Naive thymus-derived CD4-positive, alpha-beta T cell (primary cell): ENCODE measurements at regions of chr2 and their contacts with region 1.

Region 1: DNA sequence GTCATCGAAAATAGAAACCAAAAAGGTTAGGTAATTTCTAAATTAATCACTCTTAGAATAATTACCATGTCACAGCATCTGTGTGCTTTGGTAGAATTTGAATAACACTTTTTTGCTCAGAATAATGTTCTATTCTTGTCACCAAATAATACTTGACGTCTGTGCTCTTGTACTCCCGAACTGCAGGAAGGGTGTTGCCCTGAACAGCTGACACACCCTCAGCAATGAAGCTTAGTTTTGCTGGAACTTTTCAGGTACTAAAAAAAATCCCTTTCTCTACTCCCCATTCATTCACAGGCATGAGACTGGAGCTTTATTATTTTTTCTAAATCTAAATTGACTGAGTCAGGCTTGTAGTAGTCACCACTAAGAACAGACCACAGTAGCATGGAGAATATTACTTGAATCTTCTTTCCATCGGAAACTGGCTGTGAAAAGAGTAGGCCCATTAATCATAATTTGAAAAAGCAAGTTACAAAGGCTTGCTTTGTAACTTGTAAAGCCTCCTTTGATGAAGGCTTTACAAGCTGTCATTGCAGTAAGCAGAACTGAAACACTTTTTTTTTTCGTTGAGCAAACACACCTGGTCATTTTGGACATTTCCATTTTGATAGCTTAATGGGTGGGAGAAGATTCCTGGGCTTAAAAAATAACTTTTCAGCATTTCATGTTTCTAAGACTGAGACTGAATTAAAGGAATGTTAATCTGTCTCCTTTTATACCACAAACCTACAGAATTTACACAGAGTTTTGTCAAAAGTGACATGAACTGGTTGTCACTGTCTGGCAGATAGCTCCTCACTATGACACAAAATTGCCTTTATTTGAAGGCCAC is 70.3 kb upstream of the PELI1 start:
- DNase-seq: peak in 7 of 9 donors; percentile 60 to 82 (median 73)
- ATAC-seq: peak; percentile 73
- H3K4me3 ChIP-seq: peak overlapping the region; percentile 11
- H3K4me3 Mint-ChIP-seq: peak overlapping the region; percentile 35 to 89 (median 71)
- H3K27ac ChIP-seq: peak overlapping the region; percentile 68
- H3K27ac Mint-ChIP-seq: peak overlapping the region; percentile 78 to 96 (median 93)
- H3K4me1 ChIP-seq: peaks cover 20 to 37% of the 10 kb centered on the region in 2 donors
- H3K4me1 Mint-ChIP-seq: peaks cover 24 to 69% (median 55%) of the 10 kb centered on the region in 7 donors
- H3K27me3 ChIP-seq: no peaks in the 10 kb centered on the region
- H3K27me3 Mint-ChIP-seq: no peaks in the 10 kb centered on the region

Region 2: DNA sequence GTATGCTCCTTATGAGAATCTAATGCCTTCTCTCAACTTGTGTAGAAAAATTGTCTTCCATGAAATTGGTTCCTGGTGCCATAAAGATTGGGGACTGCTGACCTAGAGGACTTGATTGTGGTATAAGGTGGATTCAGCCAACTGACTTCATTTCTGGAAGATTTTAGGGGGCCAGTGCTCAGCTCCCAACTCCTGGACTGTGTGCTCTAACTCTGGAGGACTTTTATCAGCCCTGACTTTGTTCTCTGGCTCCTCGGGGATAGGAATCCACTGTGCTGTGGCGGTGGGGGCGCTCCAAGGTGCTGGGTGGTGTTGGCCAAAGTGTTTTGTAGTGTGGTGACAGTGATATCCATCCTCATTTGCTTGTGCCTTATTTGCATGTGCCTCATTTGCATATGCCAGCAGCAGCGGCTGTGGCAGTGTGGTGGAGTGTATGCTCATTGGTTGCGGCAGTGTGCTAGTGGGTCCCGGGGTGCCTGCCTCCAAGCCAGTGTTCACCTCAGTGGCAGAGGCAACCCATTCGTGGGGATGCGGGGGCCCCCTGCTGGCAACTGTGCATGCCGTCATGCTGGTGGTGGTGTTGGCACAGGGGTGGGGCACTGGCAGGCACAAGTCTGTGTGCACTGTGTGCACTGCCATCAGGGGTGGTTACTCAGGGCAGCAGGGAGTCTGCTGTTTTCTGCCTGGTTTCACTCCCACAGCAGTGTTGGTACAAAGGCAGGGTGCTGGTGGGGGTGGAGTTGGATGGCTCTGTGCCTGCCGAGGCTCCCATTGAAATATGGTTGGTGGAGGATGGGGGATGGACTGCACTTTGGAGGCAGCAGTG is 1489.4 kb before region 1 on chr2:
- CTCF ChIA-PET with region 1: no interaction called
- POLR2A ChIA-PET with region 1: no interaction called
- intact Hi-C with region 1: no loop called
- DNase-seq: no peak
- ATAC-seq: peak; percentile 49
- H3K4me3 ChIP-seq: no peak overlapping the region
- H3K4me3 Mint-ChIP-seq: peak overlapping the region in 1 of 10 donors; percentile 17
- H3K27ac ChIP-seq: no peak overlapping the region
- H3K27ac Mint-ChIP-seq: peak overlapping the region in 1 of 9 donors; percentile 2
- H3K4me1 ChIP-seq: no peaks in the 10 kb centered on the region
- H3K4me1 Mint-ChIP-seq: peaks cover 7 to 43% (median 39%) of the 10 kb centered on the region in 7 donors
- H3K27me3 ChIP-seq: no peaks in the 10 kb centered on the region
- H3K27me3 Mint-ChIP-seq: no peaks in the 10 kb centered on the region

Region 3: DNA sequence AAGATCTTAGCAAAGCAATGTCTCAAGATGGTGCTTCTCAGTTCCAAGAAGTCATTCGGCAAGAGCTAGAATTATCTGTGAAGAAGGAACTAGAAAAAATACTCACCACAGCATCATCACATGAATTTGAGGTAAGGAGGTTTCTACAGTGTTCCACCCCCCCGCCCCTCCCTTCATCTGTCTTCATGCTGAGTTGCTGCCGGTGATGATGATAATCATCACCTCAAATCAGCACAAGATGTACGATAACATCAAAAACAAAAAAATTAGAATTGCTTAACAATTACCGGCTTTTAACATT is 358.2 kb before region 1 on chr2:
- CTCF ChIA-PET with region 1: no interaction called
- POLR2A ChIA-PET with region 1: no interaction called
- intact Hi-C with region 1: loop called in 1 of 2 experiments (anchors 2 kb)
- DNase-seq: peak in 7 of 9 donors; percentile 54 to 87 (median 78)
- ATAC-seq: peak; percentile 93
- H3K4me3 ChIP-seq: peak overlapping the region; percentile 28
- H3K4me3 Mint-ChIP-seq: peak overlapping the region; percentile 42 to 78 (median 73)
- H3K27ac ChIP-seq: peak overlapping the region; percentile 81
- H3K27ac Mint-ChIP-seq: peak overlapping the region; percentile 85 to 97 (median 93)
- H3K4me1 ChIP-seq: peaks cover 27 to 36% of the 10 kb centered on the region in 2 donors
- H3K4me1 Mint-ChIP-seq: peaks cover 40 to 73% (median 71%) of the 10 kb centered on the region in 7 donors
- H3K27me3 ChIP-seq: no peaks in the 10 kb centered on the region
- H3K27me3 Mint-ChIP-seq: no peaks in the 10 kb centered on the region

Region 4: DNA sequence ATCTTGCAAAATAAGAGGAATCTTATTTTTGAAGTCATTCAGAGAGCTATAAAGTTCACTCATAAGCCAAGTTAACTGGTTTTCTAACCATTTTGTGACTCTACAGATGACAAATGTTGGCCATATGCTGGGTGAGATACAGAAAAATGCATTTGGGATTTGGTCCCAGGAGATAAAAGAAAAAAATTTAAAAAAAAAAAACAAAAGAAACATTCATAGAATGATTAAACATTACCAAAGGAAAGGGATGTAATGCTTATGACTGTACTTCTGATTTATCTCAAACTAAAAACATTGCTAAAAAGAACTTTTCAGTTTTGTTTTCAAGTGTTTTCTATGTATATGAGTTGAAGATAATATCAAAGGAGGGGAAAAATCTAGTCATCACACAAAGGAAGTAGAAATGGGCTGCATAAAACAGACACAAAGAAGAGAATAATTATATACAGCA is 113.3 kb before region 1 on chr2:
- CTCF ChIA-PET with region 1: no interaction called
- POLR2A ChIA-PET with region 1: no interaction called
- intact Hi-C with region 1: loop called in 1 of 2 experiments (anchors 1 kb)
- DNase-seq: peak in 6 of 9 donors; percentile 10 to 57 (median 44)
- ATAC-seq: peak; percentile 56
- H3K4me3 ChIP-seq: no peak overlapping the region
- H3K4me3 Mint-ChIP-seq: peak overlapping the region in 9 of 10 donors; percentile 18 to 83 (median 55)
- H3K27ac ChIP-seq: peak overlapping the region; percentile 33
- H3K27ac Mint-ChIP-seq: peak overlapping the region; percentile 44 to 88 (median 80)
- H3K4me1 ChIP-seq: peaks cover 0 to 16% of the 10 kb centered on the region in 2 donors
- H3K4me1 Mint-ChIP-seq: peaks cover 14 to 66% (median 60%) of the 10 kb centered on the region in 7 donors
- H3K27me3 ChIP-seq: no peaks in the 10 kb centered on the region
- H3K27me3 Mint-ChIP-seq: no peaks in the 10 kb centered on the region

Region 5: DNA sequence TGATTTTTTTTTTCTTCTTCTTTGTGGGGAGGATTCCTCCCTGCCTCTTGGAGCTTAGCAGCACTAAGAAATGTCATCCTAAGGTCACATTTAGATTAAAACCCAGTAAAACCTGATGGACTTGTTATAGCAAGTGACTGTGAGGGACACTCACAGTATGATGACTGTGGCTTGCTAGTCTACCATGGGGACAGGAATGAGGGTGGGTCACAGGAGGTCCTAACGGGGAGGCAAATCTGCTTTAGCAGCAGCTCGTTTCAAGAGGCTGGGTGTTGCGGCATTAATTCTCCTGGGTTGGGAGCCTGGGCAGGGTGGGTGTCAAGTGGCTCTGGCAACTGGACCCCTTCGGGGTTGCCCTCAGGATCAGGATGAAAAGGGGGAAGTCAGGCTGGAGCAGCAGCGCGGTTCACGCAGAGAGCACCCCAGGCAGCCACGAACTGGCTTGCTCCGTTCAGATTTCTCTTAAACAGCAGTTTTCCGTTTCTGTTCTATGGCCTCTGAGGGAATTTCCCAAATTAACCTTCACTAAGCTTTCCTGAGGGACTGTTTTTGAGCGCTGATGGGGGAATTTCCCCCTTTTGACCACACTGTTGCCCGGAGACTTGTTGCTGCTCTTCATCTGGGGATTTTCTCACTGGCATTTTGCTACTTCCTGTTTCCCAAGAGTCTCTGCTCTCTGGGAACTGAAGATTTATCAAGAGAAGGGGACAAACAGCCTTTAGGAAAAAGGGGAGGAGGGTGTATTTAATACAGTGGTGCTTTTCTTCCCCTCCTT is 10.5 kb before region 1 on chr2:
- CTCF ChIA-PET with region 1: interaction called, 3 read pairs
- POLR2A ChIA-PET with region 1: interaction called, 9 read pairs
- intact Hi-C with region 1: loop called (anchors 1 kb)
- DNase-seq: peak in 5 of 9 donors; percentile 12 to 67 (median 28)
- ATAC-seq: peak; percentile 81
- H3K4me3 ChIP-seq: peak overlapping the region; percentile 52
- H3K4me3 Mint-ChIP-seq: peak overlapping the region; percentile 72 to 89 (median 80)
- H3K27ac ChIP-seq: peak overlapping the region; percentile 66
- H3K27ac Mint-ChIP-seq: peak overlapping the region; percentile 82 to 95 (median 94)
- H3K4me1 ChIP-seq: peaks cover 0 to 51% of the 10 kb centered on the region in 2 donors
- H3K4me1 Mint-ChIP-seq: peaks cover 26 to 91% (median 81%) of the 10 kb centered on the region in 7 donors
- H3K27me3 ChIP-seq: no peaks in the 10 kb centered on the region
- H3K27me3 Mint-ChIP-seq: no peaks in the 10 kb centered on the region

Region 6: DNA sequence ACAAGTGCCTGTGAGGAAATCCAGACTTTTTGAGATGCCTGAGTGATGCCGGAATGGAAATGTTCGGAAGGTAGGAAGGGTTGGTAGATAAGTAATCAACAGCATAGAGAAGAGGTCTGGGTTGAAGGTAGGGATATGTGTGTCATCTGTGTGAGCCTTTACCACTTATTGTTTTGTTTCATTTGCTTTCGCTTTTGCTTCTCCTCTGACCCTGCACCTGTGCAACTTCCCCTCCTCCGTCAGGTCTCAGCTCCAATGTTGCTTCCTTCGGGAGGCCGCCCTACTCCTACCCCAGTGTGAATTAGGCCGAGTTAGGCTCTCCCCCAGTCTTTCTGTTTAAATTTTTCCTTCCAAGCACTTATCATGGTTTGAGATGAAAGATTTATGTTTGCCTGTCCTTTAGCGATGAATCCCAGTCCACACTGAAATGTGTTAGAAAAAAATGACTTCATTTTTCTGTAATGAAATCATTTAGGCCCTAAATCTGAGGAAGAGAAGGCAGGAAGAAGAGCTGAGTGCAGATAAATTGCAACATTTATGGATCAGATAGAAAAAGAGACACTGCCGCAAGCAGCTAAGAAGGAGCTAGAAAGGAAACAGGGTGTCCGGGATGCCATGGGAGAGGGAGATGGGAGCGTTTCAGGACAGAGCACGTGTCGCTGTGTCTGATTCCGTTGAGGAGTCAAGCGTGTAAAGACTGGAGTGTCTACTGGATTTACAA is 69.3 kb after region 1 on chr2:
- CTCF ChIA-PET with region 1: no interaction called
- POLR2A ChIA-PET with region 1: no interaction called
- intact Hi-C with region 1: loop called in 1 of 2 experiments (anchors 5 kb)
- DNase-seq: peak in 7 of 9 donors; percentile 14 to 54 (median 41)
- ATAC-seq: peak; percentile 82
- H3K4me3 ChIP-seq: peak overlapping the region; percentile 41
- H3K4me3 Mint-ChIP-seq: no peak overlapping the region
- H3K27ac ChIP-seq: peak overlapping the region; percentile 59
- H3K27ac Mint-ChIP-seq: no peak overlapping the region
- H3K4me1 ChIP-seq: peaks cover 8 to 12% of the 10 kb centered on the region in 2 donors
- H3K4me1 Mint-ChIP-seq: no peaks in the 10 kb centered on the region
- H3K27me3 ChIP-seq: no peaks in the 10 kb centered on the region
- H3K27me3 Mint-ChIP-seq: no peaks in the 10 kb centered on the region